Vagina (tissue), 2 donors: ENCODE measurements at regions of chr6 and their contacts with region 1.

Region 1: DNA sequence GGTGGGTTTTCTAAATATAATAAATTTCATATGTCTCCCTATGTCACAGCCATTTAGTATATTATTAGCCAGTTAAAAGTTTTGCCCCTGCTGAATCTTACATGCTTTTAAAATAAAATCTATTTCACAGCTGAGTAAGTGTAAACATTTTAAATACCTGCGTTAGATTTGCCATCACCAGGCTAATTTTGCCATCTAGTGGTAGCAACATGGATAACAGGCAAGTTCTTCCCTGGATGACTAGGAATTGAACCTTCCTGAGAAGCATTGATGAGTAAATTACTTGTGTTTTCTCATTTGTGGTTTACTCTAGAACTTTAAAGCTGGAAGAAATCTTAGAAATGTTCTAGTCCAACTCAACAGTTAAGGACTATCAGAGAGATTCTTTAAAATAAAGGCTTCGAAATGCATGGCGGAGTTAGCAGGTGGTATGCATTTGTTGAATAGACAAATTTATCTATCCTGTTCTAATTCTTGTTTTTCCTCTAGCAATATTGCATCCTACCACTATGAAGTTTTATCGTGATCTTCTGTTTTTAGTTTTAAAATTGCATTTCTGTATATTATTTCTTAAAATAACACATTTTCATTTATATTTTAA is 2.6 kb downstream of the PRSS35 start:
- DNase-seq: no peak
- H3K4me3 ChIP-seq: no peak overlapping the region
- H3K27ac ChIP-seq: no peak overlapping the region
- H3K4me1 ChIP-seq: peaks cover 12% of the 10 kb centered on the region
- H3K27me3 ChIP-seq: no peaks in the 10 kb centered on the region
- CTCF ChIP-seq: peak in 2 of 3 experiments; percentile 59 to 63
- POLR2A ChIP-seq: no peak

Region 2: DNA sequence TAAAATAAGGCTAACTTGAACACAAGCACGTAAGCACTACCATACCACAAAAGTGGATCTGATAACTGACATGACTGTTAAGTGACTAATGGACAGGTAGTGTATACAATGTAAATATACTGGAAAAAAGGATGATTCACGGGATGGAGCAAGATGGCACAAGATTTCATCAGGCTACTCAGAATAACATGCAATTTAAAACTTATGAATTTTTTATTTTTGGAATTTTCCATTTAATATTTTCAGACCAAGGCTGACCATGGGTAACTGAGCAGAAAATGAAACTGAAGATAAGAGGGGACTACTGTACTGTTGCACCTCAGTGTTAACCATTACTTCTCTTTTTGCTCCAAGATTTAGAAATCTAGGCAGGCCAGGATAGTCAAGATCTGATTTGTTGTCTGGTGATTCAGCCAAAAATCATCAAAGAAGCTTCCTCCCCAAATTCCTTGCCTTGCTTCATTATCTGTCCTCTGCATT is 1106.0 kb before region 1 on chr6:
- intact Hi-C with region 1: no loop called
- DNase-seq: no peak
- H3K4me3 ChIP-seq: no peak overlapping the region
- H3K27ac ChIP-seq: no peak overlapping the region
- H3K4me1 ChIP-seq: no peaks in the 10 kb centered on the region
- H3K27me3 ChIP-seq: no peaks in the 10 kb centered on the region
- CTCF ChIP-seq: no peak
- POLR2A ChIP-seq: no peak

Region 3: DNA sequence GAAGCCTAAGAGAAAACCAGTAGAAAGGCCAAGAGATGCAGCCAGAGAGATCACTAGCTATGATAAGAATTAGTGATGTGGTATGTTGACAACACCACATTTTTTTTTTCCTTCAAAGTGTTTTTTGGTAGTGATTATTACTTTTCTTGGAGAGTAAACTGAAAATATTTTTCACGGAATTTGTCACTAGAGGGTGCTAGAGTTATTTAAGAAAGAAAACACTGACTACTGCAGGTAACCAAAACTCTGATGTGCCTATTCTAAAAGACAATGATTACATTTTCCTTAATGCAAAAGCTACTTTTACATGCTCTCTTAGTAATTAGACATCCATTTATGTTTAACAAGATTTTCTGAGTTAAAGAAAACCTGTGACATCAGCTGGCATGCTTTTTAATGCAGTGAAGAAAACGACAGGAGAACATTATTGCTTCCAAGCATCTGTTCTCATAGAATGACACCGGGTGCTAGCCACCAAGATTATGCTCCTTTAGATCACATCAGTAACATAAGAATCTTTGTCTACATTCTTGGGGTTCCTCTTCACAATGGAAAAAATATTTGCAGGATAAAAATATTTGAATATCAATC is 293.0 kb before region 1 on chr6:
- intact Hi-C with region 1: loop called (anchors 10 kb)
- DNase-seq: no peak
- H3K4me3 ChIP-seq: no peak overlapping the region
- H3K27ac ChIP-seq: no peak overlapping the region
- H3K4me1 ChIP-seq: no peaks in the 10 kb centered on the region
- H3K27me3 ChIP-seq: no peaks in the 10 kb centered on the region
- CTCF ChIP-seq: peak in 2 of 3 experiments; percentile 26 to 31
- POLR2A ChIP-seq: no peak

Region 4: DNA sequence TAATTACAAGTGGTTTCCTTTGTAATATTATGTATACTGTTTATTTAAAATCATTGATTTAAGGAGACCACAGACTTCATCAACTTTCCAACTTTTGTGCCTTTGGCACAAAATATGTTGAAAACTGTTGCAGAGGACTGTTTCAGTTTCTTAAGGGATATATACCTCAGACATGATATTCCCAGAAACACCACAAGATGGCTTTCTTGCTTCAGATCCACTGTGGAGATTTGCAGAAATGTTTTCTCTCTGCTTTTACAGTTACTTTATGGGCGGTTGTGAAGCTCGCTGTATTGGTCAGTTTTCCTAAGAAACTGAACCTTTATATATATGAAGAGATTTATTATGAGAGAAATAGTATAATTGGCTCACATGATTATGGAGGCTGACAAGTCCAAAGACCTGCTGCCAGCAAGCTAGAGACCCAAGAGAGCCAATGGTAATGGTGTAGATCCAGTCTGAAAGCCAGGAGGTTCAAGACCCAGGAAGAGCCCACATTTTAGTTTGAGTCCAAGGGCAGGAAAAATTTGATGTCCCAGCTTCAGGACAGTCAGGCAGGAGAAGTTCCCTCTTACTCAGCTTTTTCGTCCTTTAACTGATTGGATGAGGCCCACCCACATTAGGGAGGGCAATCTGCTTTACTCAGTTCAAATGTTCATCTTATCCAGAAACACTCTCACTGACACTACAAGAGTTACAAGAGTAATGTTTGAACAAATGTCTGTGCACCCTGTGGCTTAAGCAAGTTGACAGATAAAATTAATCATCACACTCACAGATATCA is 96.9 kb before region 1 on chr6:
- intact Hi-C with region 1: loop called (anchors 10 kb)
- DNase-seq: no peak
- H3K4me3 ChIP-seq: no peak overlapping the region
- H3K27ac ChIP-seq: no peak overlapping the region
- H3K4me1 ChIP-seq: no peaks in the 10 kb centered on the region
- H3K27me3 ChIP-seq: no peaks in the 10 kb centered on the region
- CTCF ChIP-seq: peak in 2 of 3 experiments; percentile 37 to 55
- POLR2A ChIP-seq: no peak